ENCODE measurements at regions of chr1 and their contacts with region 1.

Region 1: GRCh38 chr1:156740679-156741612 is at the start of gene MRPL24:
- H3K4me3 ChIP-seq: peak within 1 kb of the TSS; percentile 74
- H3K27ac ChIP-seq: peak within 1 kb of the TSS; percentile 59
- H3K4me1 ChIP-seq: no peaks in the 10 kb centered on the region
- CTCF ChIP-seq: 0 out of 2 replicates have a peak, but pooled peaks have one; percentile 11

Region 2: GRCh38 chr1:156751758-156752757 is 11.1 kb after region 1 on chr1:
- CTCF ChIA-PET with region 1: no interaction called
- POLR2A ChIA-PET with region 1: interaction called, 63 read pairs
- H3K4me3 ChIP-seq: peak overlapping the region; percentile 87
- H3K27ac ChIP-seq: peak overlapping the region; percentile 71
- H3K4me1 ChIP-seq: 0 out of 2 replicates have a peak, but pooled peaks cover 11% of the 10 kb centered on the region
- CTCF ChIP-seq: peak; percentile 17; the same call in 1 of the 2 replicates

Measured in HEK293 (cell line).